ENCODE measurements at regions of chr20 and their contacts with region 1.

Region 1: GRCh38 chr20:23727016-23727415 is 23.7 kb downstream of the CST1 start:
- DNase-seq: no peak
- H3K4me3 ChIP-seq: no peak overlapping the region
- H3K27ac ChIP-seq: no peak overlapping the region
- H3K4me1 ChIP-seq: no peaks in the 10 kb centered on the region
- H3K27me3 ChIP-seq: no peaks in the 10 kb centered on the region
- CTCF ChIP-seq: no peak

Region 2: GRCh38 chr20:23530937-23531567 is 196.0 kb before region 1 on chr20:
- CTCF ChIA-PET with region 1: no interaction called
- POLR2A ChIA-PET with region 1: no interaction called
- intact Hi-C with region 1: no loop called
- DNase-seq: no peak
- H3K4me3 ChIP-seq: no peak overlapping the region
- H3K27ac ChIP-seq: no peak overlapping the region
- H3K4me1 ChIP-seq: no peaks in the 10 kb centered on the region
- H3K27me3 ChIP-seq: no peaks in the 10 kb centered on the region
- CTCF ChIP-seq: no peak

Region 3: DNA sequence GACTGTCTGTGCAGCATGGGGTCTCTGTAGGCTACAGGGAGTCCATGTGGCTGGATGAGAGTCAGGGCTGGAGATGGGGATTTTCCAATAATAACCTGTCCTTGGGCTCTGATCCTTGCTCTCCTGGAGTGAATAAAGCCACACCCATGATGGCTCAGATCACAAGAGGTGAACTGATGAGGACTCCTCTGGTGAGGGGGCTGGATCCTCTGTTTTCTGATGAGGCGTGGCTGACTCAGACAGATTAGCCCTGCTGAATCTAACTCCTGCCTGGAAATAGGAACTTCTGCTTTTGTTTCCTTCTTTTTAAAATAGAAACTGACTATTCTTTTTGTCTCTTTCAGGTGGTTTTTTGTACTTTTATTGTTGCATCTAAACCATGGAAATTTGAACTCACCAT is 185.7 kb before region 1 on chr20:
- CTCF ChIA-PET with region 1: no interaction called
- POLR2A ChIA-PET with region 1: no interaction called
- intact Hi-C with region 1: no loop called
- DNase-seq: no peak
- H3K4me3 ChIP-seq: no peak overlapping the region
- H3K27ac ChIP-seq: no peak overlapping the region
- H3K4me1 ChIP-seq: no peaks in the 10 kb centered on the region
- H3K27me3 ChIP-seq: peaks cover 5% of the 10 kb centered on the region
- CTCF ChIP-seq: no peak

Region 4: DNA sequence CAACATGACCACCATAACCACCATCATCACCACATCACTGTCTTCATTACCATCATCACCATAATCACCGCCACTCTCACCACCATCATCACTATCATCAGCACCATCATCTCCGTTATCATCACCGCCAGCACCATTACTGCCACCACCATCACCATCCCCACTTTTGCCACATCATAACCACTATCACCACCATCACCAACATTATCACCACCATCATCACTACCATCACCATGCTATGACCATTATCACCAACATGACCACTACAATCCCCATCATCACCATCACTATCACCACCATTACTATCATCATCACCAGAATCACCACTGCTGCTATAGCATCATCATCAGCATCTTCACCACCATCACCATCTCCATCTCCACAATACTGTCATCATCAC is 73.9 kb after region 1 on chr20:
- CTCF ChIA-PET with region 1: interaction called, 3 read pairs
- POLR2A ChIA-PET with region 1: no interaction called
- intact Hi-C with region 1: loop called (anchors 2 kb)
- DNase-seq: no peak
- H3K4me3 ChIP-seq: no peak overlapping the region
- H3K27ac ChIP-seq: no peak overlapping the region
- H3K4me1 ChIP-seq: no peaks in the 10 kb centered on the region
- H3K27me3 ChIP-seq: peaks cover 3% of the 10 kb centered on the region
- CTCF ChIP-seq: no peak